ENCODE measurements at regions of chr1 and their contacts with region 1.

Region 1: GRCh38 chr1:28088168-28088961 is at the start of gene EYA3:
- DNase-seq: peak; percentile 94 to 96
- H3K4me3 ChIP-seq: peak within 1 kb of the TSS; percentile 76 to 90 (median 83)
- H3K27ac ChIP-seq: peak within 1 kb of the TSS; percentile 69
- H3K4me1 ChIP-seq: peaks cover 0 to 1% (median 0%) of the 10 kb centered on the region in 4 experiments; a peak in 1 of 7 replicates
- H3K27me3 ChIP-seq: no peaks in the 10 kb centered on the region
- CTCF ChIP-seq: no peak
- EP300 ChIP-seq: no peak
- POLR2A ChIP-seq: peak; percentile 62 to 82
- RAD21 ChIP-seq: no peak; a peak in 1 of 4 replicates
- total RNA-seq, gene EYA3: 33.9 and 34.2 TPM in 2 replicates

Region 2: GRCh38 chr1:27993241-27993640 is 95.1 kb before region 1 on chr1:
- CTCF ChIA-PET with region 1: no interaction called
- POLR2A ChIA-PET with region 1: no interaction called
- DNase-seq: no peak
- H3K4me3 ChIP-seq: no peak overlapping the region
- H3K27ac ChIP-seq: no peak overlapping the region
- H3K4me1 ChIP-seq: no peaks in the 10 kb centered on the region
- H3K27me3 ChIP-seq: no peaks in the 10 kb centered on the region
- CTCF ChIP-seq: no peak
- EP300 ChIP-seq: no peak
- POLR2A ChIP-seq: no peak
- RAD21 ChIP-seq: no peak

Region 3: GRCh38 chr1:28099050-28099769 is 10.8 kb after region 1 on chr1:
- CTCF ChIA-PET with region 1: interaction called, 22 read pairs
- POLR2A ChIA-PET with region 1: interaction called, 3 read pairs
- DNase-seq: peak in 1 of 2 experiments; percentile 28
- H3K4me3 ChIP-seq: no peak overlapping the region
- H3K27ac ChIP-seq: no peak overlapping the region
- H3K4me1 ChIP-seq: no peaks in the 10 kb centered on the region
- H3K27me3 ChIP-seq: no peaks in the 10 kb centered on the region
- CTCF ChIP-seq: no peak
- EP300 ChIP-seq: no peak
- POLR2A ChIP-seq: no peak
- RAD21 ChIP-seq: no peak

Region 4: GRCh38 chr1:28104866-28105467 is 16.6 kb after region 1 on chr1:
- CTCF ChIA-PET with region 1: interaction called, 22 read pairs
- POLR2A ChIA-PET with region 1: interaction called, 3 read pairs
- DNase-seq: peak; percentile 81 to 87
- H3K4me3 ChIP-seq: peak overlapping the region; percentile 4 to 49 (median 22); a peak in 6 of 8 replicates
- H3K27ac ChIP-seq: peak overlapping the region; percentile 18; the same call in 1 of the 2 replicates
- H3K4me1 ChIP-seq: peaks cover 0 to 2% (median 0%) of the 10 kb centered on the region in 4 experiments; a peak in 2 of 7 replicates
- H3K27me3 ChIP-seq: no peaks in the 10 kb centered on the region
- CTCF ChIP-seq: no peak
- EP300 ChIP-seq: no peak
- POLR2A ChIP-seq: peak; percentile 68 to 86
- RAD21 ChIP-seq: no peak

Region 5: DNA sequence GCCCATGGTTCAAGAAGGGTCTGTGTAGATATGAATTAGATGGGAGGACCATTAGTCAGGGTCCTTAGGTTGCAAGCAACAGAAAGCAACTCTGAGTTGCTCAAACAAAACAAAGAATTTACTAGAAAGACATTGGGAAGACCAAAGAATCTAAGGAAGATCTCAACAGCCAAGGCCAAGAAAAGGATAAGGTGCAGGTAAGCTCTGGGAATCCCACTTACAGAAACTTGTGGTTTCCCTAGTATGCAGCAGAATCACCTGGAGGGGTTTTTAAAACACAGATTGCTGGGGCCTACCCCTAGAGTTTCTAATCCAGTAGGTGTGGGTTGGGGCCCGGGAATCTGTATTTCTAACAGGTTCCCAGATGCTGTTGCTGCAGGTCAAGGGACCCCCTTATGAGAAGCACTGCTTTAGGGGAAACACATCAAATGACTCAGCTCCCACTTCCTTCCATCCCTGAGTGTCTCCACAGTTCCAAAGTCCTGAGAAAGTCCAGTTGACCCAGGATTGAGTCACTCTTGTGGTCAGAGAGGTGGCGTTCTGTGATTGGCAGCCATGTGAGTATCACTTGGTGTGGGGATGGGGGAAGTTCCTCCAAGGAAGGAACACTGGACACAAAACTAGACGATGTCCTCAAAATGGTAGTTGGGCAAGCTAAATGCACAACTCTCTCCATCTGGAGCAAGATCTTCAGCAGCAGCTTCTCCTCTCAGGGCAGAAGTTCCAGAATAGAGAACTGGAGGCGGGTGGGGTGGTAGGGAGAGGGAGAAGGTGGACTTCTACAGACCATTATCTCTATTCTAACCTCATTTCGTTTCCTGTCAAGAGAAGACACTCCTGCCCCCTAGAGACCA is 24.2 kb after region 1 on chr1:
- CTCF ChIA-PET with region 1: interaction called, 80 read pairs
- POLR2A ChIA-PET with region 1: interaction called, 3 read pairs
- DNase-seq: no peak
- H3K4me3 ChIP-seq: no peak overlapping the region
- H3K27ac ChIP-seq: no peak overlapping the region; the same call in 1 of the 2 replicates
- H3K4me1 ChIP-seq: no peaks in the 10 kb centered on the region
- H3K27me3 ChIP-seq: no peaks in the 10 kb centered on the region
- CTCF ChIP-seq: no peak
- EP300 ChIP-seq: no peak
- POLR2A ChIP-seq: no peak
- RAD21 ChIP-seq: peak in 1 of 2 experiments; percentile 47; a peak in 2 of 4 replicates

Region 6: GRCh38 chr1:28118640-28119307 is 30.4 kb after region 1 on chr1:
- CTCF ChIA-PET with region 1: interaction called, 80 read pairs
- POLR2A ChIA-PET with region 1: interaction called, 4 read pairs
- DNase-seq: no peak
- H3K4me3 ChIP-seq: no peak overlapping the region
- H3K27ac ChIP-seq: no peak overlapping the region
- H3K4me1 ChIP-seq: no peaks in the 10 kb centered on the region
- H3K27me3 ChIP-seq: no peaks in the 10 kb centered on the region
- CTCF ChIP-seq: no peak
- EP300 ChIP-seq: no peak
- POLR2A ChIP-seq: no peak
- RAD21 ChIP-seq: no peak

Region 7: DNA sequence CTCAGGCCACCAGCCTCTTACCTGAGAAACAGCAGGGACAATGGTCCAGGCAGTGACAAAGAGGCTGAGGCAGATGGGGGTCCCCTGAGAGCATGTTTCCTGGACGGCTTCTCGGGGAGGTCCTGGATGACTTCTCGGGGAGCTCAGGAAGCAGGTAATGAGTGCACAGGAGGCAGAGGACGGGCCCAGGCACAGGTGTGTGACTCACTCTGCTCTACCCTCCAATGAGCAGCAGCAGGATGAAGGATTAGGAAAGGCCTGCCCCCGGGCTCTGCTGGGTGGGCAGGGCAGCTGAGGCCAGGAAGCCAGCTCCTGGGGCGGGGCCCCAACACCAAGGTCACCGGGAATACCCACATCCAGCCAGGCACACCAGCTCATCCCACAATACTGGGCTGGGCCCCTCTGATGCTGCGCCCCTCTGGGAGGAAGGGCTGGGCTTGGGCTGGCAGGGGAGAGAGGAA is 105.4 kb after region 1 on chr1:
- CTCF ChIA-PET with region 1: interaction called, 17 read pairs
- POLR2A ChIA-PET with region 1: interaction called, 4 read pairs
- DNase-seq: peak; percentile 44 to 62
- H3K4me3 ChIP-seq: no peak overlapping the region
- H3K27ac ChIP-seq: no peak overlapping the region
- H3K4me1 ChIP-seq: peaks cover 11 to 34% (median 22%) of the 10 kb centered on the region in 4 experiments
- H3K27me3 ChIP-seq: no peaks in the 10 kb centered on the region
- CTCF ChIP-seq: no peak
- EP300 ChIP-seq: no peak
- POLR2A ChIP-seq: peak in 1 of 2 experiments; percentile 46; a peak in 1 of 3 replicates
- RAD21 ChIP-seq: no peak

Region 8: GRCh38 chr1:28208818-28209441 is 120.6 kb after region 1 on chr1:
- CTCF ChIA-PET with region 1: interaction called, 52 read pairs
- POLR2A ChIA-PET with region 1: interaction called, 4 read pairs
- DNase-seq: peak in 1 of 2 experiments; percentile 53
- H3K4me3 ChIP-seq: no peak overlapping the region
- H3K27ac ChIP-seq: no peak overlapping the region
- H3K4me1 ChIP-seq: no peaks in the 10 kb centered on the region
- H3K27me3 ChIP-seq: no peaks in the 10 kb centered on the region
- CTCF ChIP-seq: peak in 2 of 3 experiments; percentile 77 to 79; a peak in 3 of 4 replicates
- EP300 ChIP-seq: no peak
- POLR2A ChIP-seq: no peak
- RAD21 ChIP-seq: peak; percentile 89 to 91